ENCODE measurements at regions of chr10 and their contacts with region 1.

Region 1: GRCh38 chr10:77710759-77711682 is 73.4 kb upstream of the KCNMA1 start:
- DNase-seq: peak; percentile 76 to 93 (median 88)
- ATAC-seq: peak; percentile 98
- H3K4me3 ChIP-seq: no peak overlapping the region
- H3K27ac ChIP-seq: no peak overlapping the region
- H3K4me1 ChIP-seq: peaks cover 3 to 8% of the 10 kb centered on the region in 2 experiments; a peak in 3 of 5 replicates
- H3K27me3 ChIP-seq: peaks cover 2 to 36% of the 10 kb centered on the region in 2 experiments; a peak in 3 of 5 replicates
- CTCF ChIP-seq: peak; percentile 93 to 97 (median 96)
- EP300 ChIP-seq: no peak
- POLR2A ChIP-seq: no peak
- RAD21 ChIP-seq: peak; percentile 64 to 85

Region 2: DNA sequence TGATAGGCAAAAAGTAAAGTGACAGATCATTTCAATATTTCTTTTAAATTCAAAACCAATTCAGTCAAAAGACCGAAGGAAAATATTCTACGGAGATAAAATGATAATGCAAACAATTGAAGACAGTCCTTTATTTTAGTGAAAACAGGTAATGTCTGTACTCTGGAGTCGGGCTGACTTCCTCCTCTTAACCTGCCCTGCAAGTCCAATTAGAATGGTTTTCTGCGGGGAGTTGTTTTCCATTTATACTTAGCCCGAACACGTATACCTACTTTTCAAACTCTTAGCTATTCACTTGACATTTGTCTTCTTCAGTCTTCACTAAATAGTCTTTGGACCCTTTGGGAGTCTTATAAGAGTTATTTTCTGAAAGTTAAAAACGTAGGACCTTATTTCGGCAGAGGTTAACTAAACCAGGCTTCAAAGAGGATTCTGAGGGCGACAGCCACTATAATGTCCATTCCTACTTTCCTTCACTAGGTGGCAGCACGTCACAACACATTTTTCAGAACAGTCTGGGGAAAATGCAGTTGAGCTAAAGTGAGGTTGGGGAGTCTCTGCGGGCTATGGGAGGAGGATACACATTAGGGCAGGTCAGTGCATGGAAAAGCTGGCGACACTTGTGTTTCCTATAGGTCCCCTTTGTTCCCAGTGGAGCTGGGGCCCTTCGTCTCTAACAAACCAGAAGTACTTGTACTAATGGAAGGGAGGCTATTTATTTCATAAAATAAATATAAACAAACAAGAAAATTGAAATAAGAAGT is 545.4 kb before region 1 on chr10:
- CTCF ChIA-PET with region 1: no interaction called
- POLR2A ChIA-PET with region 1: no interaction called
- in situ Hi-C with region 1: no loop called
- intact Hi-C with region 1: loop called (anchors 2 kb)
- DNase-seq: peak; percentile 49 to 69 (median 56)
- ATAC-seq: peak; percentile 94
- H3K4me3 ChIP-seq: no peak overlapping the region
- H3K27ac ChIP-seq: no peak overlapping the region
- H3K4me1 ChIP-seq: no peaks in the 10 kb centered on the region
- H3K27me3 ChIP-seq: no peaks in the 10 kb centered on the region
- CTCF ChIP-seq: peak; percentile 75 to 85 (median 80)
- EP300 ChIP-seq: no peak
- POLR2A ChIP-seq: no peak
- RAD21 ChIP-seq: peak; percentile 57 to 79

Region 3: DNA sequence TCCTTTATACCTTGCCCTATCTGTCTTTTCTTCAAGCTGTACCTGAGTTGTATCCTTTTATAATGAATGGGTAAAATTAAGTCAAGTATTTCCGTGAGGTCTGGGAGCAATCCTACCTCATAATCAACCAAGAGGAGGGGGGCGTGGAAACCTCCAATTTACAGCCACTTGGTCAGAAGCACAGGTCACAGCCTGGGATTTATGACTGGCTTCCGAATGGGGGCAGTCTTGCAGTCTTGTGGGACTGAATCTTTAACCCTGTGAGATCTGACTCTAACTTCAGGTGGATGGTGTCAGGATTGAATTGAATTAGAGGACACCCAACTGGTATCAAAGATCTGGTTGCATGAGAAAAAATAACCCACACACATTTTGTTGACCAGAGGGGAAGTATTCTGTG is 49.9 kb before region 1 on chr10:
- CTCF ChIA-PET with region 1: no interaction called
- POLR2A ChIA-PET with region 1: interaction called, 3 read pairs
- in situ Hi-C with region 1: no loop called
- intact Hi-C with region 1: loop called (anchors 5 kb)
- DNase-seq: peak in 1 of 4 experiments; percentile 18
- ATAC-seq: peak; percentile 84
- H3K4me3 ChIP-seq: no peak overlapping the region
- H3K27ac ChIP-seq: no peak overlapping the region
- H3K4me1 ChIP-seq: no peaks in the 10 kb centered on the region
- H3K27me3 ChIP-seq: peaks cover 5 to 13% of the 10 kb centered on the region in 2 experiments; a peak in 4 of 5 replicates
- CTCF ChIP-seq: peak in 2 of 3 experiments; percentile 43 to 47; a peak in 4 of 6 replicates
- EP300 ChIP-seq: no peak
- POLR2A ChIP-seq: no peak
- RAD21 ChIP-seq: no peak

Region 4: DNA sequence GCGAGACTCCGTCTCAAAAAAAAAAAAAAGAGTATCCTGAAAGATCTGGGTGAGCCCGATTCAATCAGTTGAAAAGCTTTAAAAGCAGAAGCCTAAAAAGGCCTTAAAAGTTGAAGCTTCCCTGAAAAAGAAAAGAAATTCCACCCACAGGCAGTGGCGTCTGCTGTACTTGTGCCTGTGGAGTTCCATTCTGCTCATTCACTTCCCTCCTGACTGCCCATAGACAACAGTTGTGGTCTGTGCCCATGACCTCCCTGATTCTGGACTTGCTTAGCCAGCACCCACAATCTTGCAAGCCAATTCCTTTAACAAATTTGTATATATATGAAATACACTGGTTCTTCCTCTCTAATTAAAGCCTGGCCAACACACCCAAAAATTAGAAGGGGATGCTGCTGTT is 73.8 kb after region 1 on chr10:
- CTCF ChIA-PET with region 1: no interaction called
- POLR2A ChIA-PET with region 1: no interaction called
- in situ Hi-C with region 1: no loop called
- intact Hi-C with region 1: no loop called
- DNase-seq: no peak
- ATAC-seq: no peak
- H3K4me3 ChIP-seq: no peak overlapping the region
- H3K27ac ChIP-seq: no peak overlapping the region
- H3K4me1 ChIP-seq: no peaks in the 10 kb centered on the region
- H3K27me3 ChIP-seq: no peaks in the 10 kb centered on the region
- CTCF ChIP-seq: no peak
- EP300 ChIP-seq: no peak
- POLR2A ChIP-seq: no peak
- RAD21 ChIP-seq: no peak